A549 (cell line): ENCODE measurements at regions of chr3 and their contacts with region 1.

Region 1: GRCh38 chr3:157136647-157137387 is 23.1 kb downstream of the CCNL1 start:
- DNase-seq: no peak
- ATAC-seq: peak; percentile 5 to 31; a peak in 4 of 6 replicates
- H3K4me3 ChIP-seq: no peak overlapping the region
- H3K27ac ChIP-seq: peak overlapping the region; percentile 26 to 59; a peak in 4 of 6 replicates
- H3K4me1 ChIP-seq: peaks cover 33% of the 10 kb centered on the region
- CTCF ChIP-seq: no peak
- EP300 ChIP-seq: no peak
- POLR2A ChIP-seq: no peak
- RAD21 ChIP-seq: no peak

Region 2: GRCh38 chr3:156151824-156152428 is 984.9 kb before region 1 on chr3:
- CTCF ChIA-PET with region 1: interaction called, 43 read pairs
- POLR2A ChIA-PET with region 1: no interaction called
- DNase-seq: peak; percentile 29 to 74
- ATAC-seq: peak; percentile 79 to 91; a peak in 5 of 6 replicates
- H3K4me3 ChIP-seq: no peak overlapping the region
- H3K27ac ChIP-seq: no peak overlapping the region
- H3K4me1 ChIP-seq: no peaks in the 10 kb centered on the region
- CTCF ChIP-seq: peak; percentile 70
- EP300 ChIP-seq: no peak
- POLR2A ChIP-seq: no peak
- RAD21 ChIP-seq: peak; percentile 73 to 84

Region 3: GRCh38 chr3:156681002-156681401 is 455.8 kb before region 1 on chr3:
- CTCF ChIA-PET with region 1: interaction called, 100 read pairs
- POLR2A ChIA-PET with region 1: no interaction called
- DNase-seq: peak; percentile 15 to 86
- ATAC-seq: peak; percentile 77 to 78
- H3K4me3 ChIP-seq: no peak overlapping the region
- H3K27ac ChIP-seq: no peak overlapping the region
- H3K4me1 ChIP-seq: peaks cover 83% of the 10 kb centered on the region
- CTCF ChIP-seq: no peak
- EP300 ChIP-seq: no peak
- POLR2A ChIP-seq: no peak
- RAD21 ChIP-seq: no peak

Region 4: GRCh38 chr3:157027861-157028745 is 108.7 kb before region 1 on chr3:
- CTCF ChIA-PET with region 1: no interaction called
- POLR2A ChIA-PET with region 1: no interaction called
- DNase-seq: no peak
- ATAC-seq: no peak
- H3K4me3 ChIP-seq: no peak overlapping the region
- H3K27ac ChIP-seq: no peak overlapping the region
- H3K4me1 ChIP-seq: no peaks in the 10 kb centered on the region
- CTCF ChIP-seq: no peak
- EP300 ChIP-seq: no peak
- POLR2A ChIP-seq: no peak
- RAD21 ChIP-seq: no peak

Region 5: GRCh38 chr3:157088601-157089454 is 48.0 kb before region 1 on chr3:
- CTCF ChIA-PET with region 1: interaction called, 72 read pairs
- POLR2A ChIA-PET with region 1: interaction called, 69 read pairs
- DNase-seq: peak; percentile 93 to 97
- ATAC-seq: peak; percentile 94
- H3K4me3 ChIP-seq: peak overlapping the region; percentile 52
- H3K27ac ChIP-seq: peak overlapping the region; percentile 93 to 98
- H3K4me1 ChIP-seq: peaks cover 23% of the 10 kb centered on the region
- CTCF ChIP-seq: no peak
- EP300 ChIP-seq: no peak
- POLR2A ChIP-seq: peak; percentile 84
- RAD21 ChIP-seq: no peak; a peak in 2 of 5 replicates

Region 6: GRCh38 chr3:157115069-157116006 is 21.5 kb before region 1 on chr3:
- CTCF ChIA-PET with region 1: interaction called, 18 read pairs
- POLR2A ChIA-PET with region 1: no interaction called
- DNase-seq: no peak
- ATAC-seq: peak in 1 of 2 experiments; percentile 47; a peak in 3 of 6 replicates
- H3K4me3 ChIP-seq: no peak overlapping the region
- H3K27ac ChIP-seq: no peak overlapping the region
- H3K4me1 ChIP-seq: peaks cover 6% of the 10 kb centered on the region; the same call in 2 of the 3 replicates
- CTCF ChIP-seq: no peak
- EP300 ChIP-seq: no peak
- POLR2A ChIP-seq: no peak
- RAD21 ChIP-seq: no peak

Region 7: DNA sequence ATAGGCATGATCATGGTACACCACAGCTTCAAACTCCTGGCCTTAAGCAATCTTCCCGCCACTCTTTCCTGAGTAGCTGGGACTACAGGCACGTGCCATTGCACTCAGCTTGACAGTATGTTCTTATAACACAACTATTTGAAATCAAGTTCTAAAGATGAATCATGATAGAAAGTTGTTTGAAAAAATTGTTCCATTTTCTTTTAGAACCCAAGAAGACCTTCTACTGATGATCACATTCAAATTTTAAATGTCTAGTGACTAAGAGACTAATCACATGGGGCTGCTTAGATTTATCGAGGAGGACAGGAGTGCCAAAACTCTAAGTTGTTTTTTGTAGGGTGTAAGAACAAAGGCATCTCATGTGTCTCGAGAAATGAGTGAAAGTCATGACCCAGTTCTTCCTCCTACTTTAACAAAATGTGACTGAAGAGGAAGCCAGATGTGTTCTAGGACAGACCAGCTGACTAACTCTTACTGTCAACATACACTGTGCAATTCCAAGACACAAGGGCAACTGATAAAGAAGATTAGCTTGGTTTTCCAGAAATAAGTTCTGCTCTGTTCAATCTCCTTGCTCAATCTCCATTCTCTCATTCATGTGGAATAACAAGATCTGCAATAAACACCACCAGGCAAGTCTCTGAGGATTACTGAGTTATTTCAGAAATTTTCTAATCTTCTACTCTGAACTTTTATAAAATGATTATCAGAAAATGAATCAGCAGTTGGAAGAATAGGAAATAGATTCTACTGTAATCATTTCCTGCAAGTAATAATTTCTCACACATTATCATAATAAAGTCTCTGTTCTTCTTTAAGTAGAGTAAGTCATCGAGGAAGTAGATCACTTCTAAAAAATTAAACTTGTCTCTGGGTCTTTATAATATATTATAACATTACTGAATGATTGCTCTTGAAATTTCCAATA is 145.7 kb after region 1 on chr3:
- CTCF ChIA-PET with region 1: no interaction called
- POLR2A ChIA-PET with region 1: no interaction called
- DNase-seq: no peak
- ATAC-seq: peak in 1 of 2 experiments; percentile 56; a peak in 2 of 6 replicates
- H3K4me3 ChIP-seq: no peak overlapping the region
- H3K27ac ChIP-seq: peak overlapping the region in 1 of 2 experiments; percentile 34; a peak in 1 of 6 replicates
- H3K4me1 ChIP-seq: no peaks in the 10 kb centered on the region; the same call in 2 of the 3 replicates
- CTCF ChIP-seq: no peak
- EP300 ChIP-seq: no peak
- POLR2A ChIP-seq: no peak
- RAD21 ChIP-seq: no peak